K562 (cell line): ENCODE measurements at regions of chr1 and their contacts with region 1.

Region 1: GRCh38 chr1:161098210-161099068 is at the start of gene KLHDC9:
- DNase-seq: no peak
- ATAC-seq: no peak; the same call in 1 of the 3 replicates
- H3K4me3 ChIP-seq: no peak within 1 kb of the TSS
- H3K27ac ChIP-seq: no peak within 1 kb of the TSS
- H3K4me1 ChIP-seq: peaks cover 0 to 7% of the 10 kb centered on the region in 2 experiments; a peak in 1 of 5 replicates
- H3K27me3 ChIP-seq: no peaks in the 10 kb centered on the region
- CTCF ChIP-seq: no peak
- EP300 ChIP-seq: no peak
- POLR2A ChIP-seq: no peak
- RAD21 ChIP-seq: no peak
- polyA plus RNA-seq, gene KLHDC9: not detected

Region 2: GRCh38 chr1:160830321-160831153 is 267.9 kb before region 1 on chr1:
- CTCF ChIA-PET with region 1: interaction called, 3 read pairs
- POLR2A ChIA-PET with region 1: no interaction called
- in situ Hi-C with region 1: loop called (anchors 25 kb)
- intact Hi-C with region 1: loop called (anchors 5 kb)
- DNase-seq: peak; percentile 45 to 72 (median 62)
- ATAC-seq: peak; percentile 95
- H3K4me3 ChIP-seq: no peak overlapping the region
- H3K27ac ChIP-seq: no peak overlapping the region
- H3K4me1 ChIP-seq: no peaks in the 10 kb centered on the region
- H3K27me3 ChIP-seq: peaks cover 0 to 12% of the 10 kb centered on the region in 2 experiments; a peak in 2 of 5 replicates
- CTCF ChIP-seq: peak; percentile 76 to 81 (median 81)
- EP300 ChIP-seq: no peak
- POLR2A ChIP-seq: no peak
- RAD21 ChIP-seq: peak; percentile 73 to 74

Region 3: GRCh38 chr1:160837558-160838205 is 260.8 kb before region 1 on chr1:
- CTCF ChIA-PET with region 1: interaction called, 3 read pairs
- POLR2A ChIA-PET with region 1: no interaction called
- in situ Hi-C with region 1: loop called (anchors 25 kb)
- intact Hi-C with region 1: loop called (anchors 5 kb)
- DNase-seq: peak in 2 of 4 experiments; percentile 13 to 24
- ATAC-seq: peak; percentile 88
- H3K4me3 ChIP-seq: no peak overlapping the region
- H3K27ac ChIP-seq: no peak overlapping the region
- H3K4me1 ChIP-seq: 0 out of 5 replicates have a peak, but pooled peaks cover 0 to 3% of the 10 kb centered on the region in 2 experiments
- H3K27me3 ChIP-seq: peaks cover 2 to 25% of the 10 kb centered on the region in 2 experiments; a peak in 2 of 5 replicates
- CTCF ChIP-seq: peak; percentile 22 to 34 (median 27); a peak in 3 of 6 replicates
- EP300 ChIP-seq: no peak
- POLR2A ChIP-seq: no peak
- RAD21 ChIP-seq: peak in 1 of 2 experiments; percentile 38; a peak in 2 of 4 replicates

Region 4: GRCh38 chr1:160997323-160998038 is 101.0 kb before region 1 on chr1:
- CTCF ChIA-PET with region 1: interaction called, 9 read pairs
- POLR2A ChIA-PET with region 1: no interaction called
- in situ Hi-C with region 1: loop called (anchors 10 kb)
- intact Hi-C with region 1: loop called (anchors 1 kb)
- DNase-seq: peak; percentile 67 to 85 (median 76)
- ATAC-seq: peak; percentile 93
- H3K4me3 ChIP-seq: no peak overlapping the region
- H3K27ac ChIP-seq: peak overlapping the region; percentile 52
- H3K4me1 ChIP-seq: peaks cover 7 to 20% of the 10 kb centered on the region in 2 experiments; a peak in 3 of 5 replicates
- H3K27me3 ChIP-seq: no peaks in the 10 kb centered on the region
- CTCF ChIP-seq: peak; percentile 91 to 93 (median 92)
- EP300 ChIP-seq: peak; percentile 29; the same call in 1 of the 2 replicates
- POLR2A ChIP-seq: no peak; the same call in 1 of the 2 replicates
- RAD21 ChIP-seq: peak; percentile 77 to 95

Region 5: GRCh38 chr1:161071886-161072371 is 26.5 kb before region 1 on chr1:
- CTCF ChIA-PET with region 1: no interaction called
- POLR2A ChIA-PET with region 1: interaction called, 6 read pairs
- in situ Hi-C with region 1: no loop called
- intact Hi-C with region 1: loop called (anchors 1 kb)
- DNase-seq: peak; percentile 77 to 80 (median 78)
- ATAC-seq: peak; percentile 90
- H3K4me3 ChIP-seq: no peak overlapping the region
- H3K27ac ChIP-seq: no peak overlapping the region
- H3K4me1 ChIP-seq: peaks cover 22 to 23% of the 10 kb centered on the region in 2 experiments
- H3K27me3 ChIP-seq: no peaks in the 10 kb centered on the region
- CTCF ChIP-seq: peak; percentile 86 to 91 (median 90)
- EP300 ChIP-seq: no peak
- POLR2A ChIP-seq: no peak
- RAD21 ChIP-seq: peak; percentile 75 to 88

Region 6: DNA sequence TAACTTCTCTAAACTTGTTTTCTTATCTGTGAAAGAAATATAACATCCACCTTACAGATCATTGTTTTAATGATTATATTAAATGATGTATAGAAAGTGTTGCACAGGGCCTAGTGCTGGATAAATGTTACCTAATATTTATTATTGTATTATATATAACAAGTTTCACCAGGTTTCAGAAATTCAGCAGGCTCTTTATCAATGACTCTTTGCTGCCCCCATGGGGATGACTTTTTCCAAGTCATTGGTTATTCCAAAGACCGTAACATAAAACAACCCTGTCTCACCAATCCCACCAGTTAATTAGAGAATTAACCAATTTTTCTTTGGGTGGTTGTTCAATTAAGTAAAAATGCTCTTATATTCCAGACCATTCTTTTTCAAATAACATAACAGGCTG is 41.3 kb after region 1 on chr1:
- CTCF ChIA-PET with region 1: no interaction called
- POLR2A ChIA-PET with region 1: interaction called, 3 read pairs
- in situ Hi-C with region 1: no loop called
- intact Hi-C with region 1: loop called (anchors 2 kb)
- DNase-seq: peak in 3 of 4 experiments; percentile 43 to 68 (median 60)
- ATAC-seq: peak; percentile 88
- H3K4me3 ChIP-seq: no peak overlapping the region
- H3K27ac ChIP-seq: no peak overlapping the region
- H3K4me1 ChIP-seq: peaks cover 0 to 4% of the 10 kb centered on the region in 2 experiments; a peak in 3 of 5 replicates
- H3K27me3 ChIP-seq: no peaks in the 10 kb centered on the region
- CTCF ChIP-seq: peak; percentile 55 to 85 (median 59); a peak in 5 of 6 replicates
- EP300 ChIP-seq: no peak
- POLR2A ChIP-seq: no peak
- RAD21 ChIP-seq: peak; percentile 65 to 75